Sciatic nerve (tissue), 2 donors: ENCODE measurements at regions of chr14 and their contacts with region 1.

Region 1: DNA sequence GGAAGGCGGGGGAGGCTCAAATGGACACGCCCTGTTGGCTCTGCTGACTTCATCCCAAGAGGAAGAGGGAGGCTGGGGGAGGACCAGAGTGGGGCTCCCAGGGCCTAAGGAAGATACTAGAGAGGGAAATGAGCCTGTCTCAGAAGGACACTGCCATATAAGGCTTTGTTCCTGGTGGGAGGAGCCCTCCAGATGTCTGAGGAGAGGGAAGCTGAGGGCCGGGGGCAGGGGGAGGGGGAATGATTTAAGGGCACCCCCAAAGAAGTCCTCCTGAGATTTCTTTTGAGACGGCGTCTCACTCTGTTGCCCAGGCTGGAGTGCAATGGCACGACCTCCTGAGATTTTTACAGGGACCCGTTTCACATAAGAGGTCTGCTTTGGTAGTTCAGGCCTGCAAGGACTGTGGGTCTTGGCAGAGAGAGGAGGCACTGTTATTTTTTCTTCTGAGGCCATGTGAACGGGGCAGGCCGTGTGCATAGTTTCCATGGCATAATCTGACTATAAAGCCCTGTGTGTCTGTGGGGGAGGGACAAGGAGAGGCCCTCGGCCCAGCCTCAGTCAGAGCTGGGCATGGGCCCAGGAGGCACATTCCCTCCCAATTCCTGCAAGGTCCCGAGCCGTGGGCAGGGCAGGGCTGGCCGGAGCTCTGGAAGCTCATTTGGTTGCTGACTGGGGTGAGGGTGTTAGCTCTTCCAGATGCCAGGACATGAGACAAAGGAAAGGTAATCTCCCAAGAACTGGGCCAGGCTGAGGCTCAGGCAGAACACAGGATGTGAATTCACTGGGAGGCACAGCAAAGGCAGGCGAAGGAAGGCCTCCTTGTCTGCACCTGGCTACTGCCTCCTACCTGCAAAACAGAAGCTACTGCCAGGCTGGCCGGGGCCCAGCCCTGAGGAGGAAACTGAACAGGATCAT is 22.2 kb upstream of the PLEKHG3 start:
- DNase-seq: peak; percentile 85
- ATAC-seq: peak; percentile 93

Region 2: GRCh38 chr14:64704143-64704742 is 22.2 kb after region 1 on chr14 and contains the start of gene PLEKHG3:
- intact Hi-C with region 1: loop called (anchors 2 kb)
- DNase-seq: peak; percentile 90
- ATAC-seq: peak; percentile 63
- total RNA-seq, gene PLEKHG3: 101 TPM

Region 3: GRCh38 chr14:64764641-64765520 is 82.8 kb after region 1 on chr14:
- intact Hi-C with region 1: loop called (anchors 5 kb)
- DNase-seq: peak; percentile 87
- ATAC-seq: peak; percentile 78

Region 4: GRCh38 chr14:65810322-65810721 is 1128.3 kb after region 1 on chr14:
- intact Hi-C with region 1: no loop called
- DNase-seq: no peak
- ATAC-seq: no peak